Psoas muscle (tissue), 8 donors: ENCODE measurements at regions of chr12 and their contacts with region 1.

Region 1: DNA sequence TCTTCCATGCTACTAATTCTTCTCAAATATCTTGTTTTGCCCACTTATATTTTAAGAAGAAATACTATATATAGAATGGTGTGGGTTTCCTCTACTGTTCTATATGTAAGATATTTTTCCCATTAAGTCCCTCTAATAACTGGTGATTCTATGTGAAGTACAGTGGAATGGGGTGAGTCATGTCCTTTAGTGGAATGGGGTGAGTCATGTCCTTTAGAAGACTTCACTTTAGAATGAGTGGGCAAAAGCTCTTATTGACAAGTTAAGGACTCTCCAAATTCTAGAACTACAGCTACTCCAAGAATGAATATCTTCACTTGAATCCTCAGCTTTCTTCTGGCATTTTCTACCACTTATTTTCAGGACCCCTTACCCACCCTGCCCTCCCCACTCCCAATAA is 349.9 kb downstream of the ETNK1 start:
- DNase-seq: no peak
- ATAC-seq: no peak
- H3K4me3 ChIP-seq: no peak overlapping the region
- H3K27ac ChIP-seq: no peak overlapping the region
- H3K4me1 ChIP-seq: no peaks in the 10 kb centered on the region
- H3K27me3 ChIP-seq: no peaks in the 10 kb centered on the region
- CTCF ChIP-seq: no peak

Region 2: DNA sequence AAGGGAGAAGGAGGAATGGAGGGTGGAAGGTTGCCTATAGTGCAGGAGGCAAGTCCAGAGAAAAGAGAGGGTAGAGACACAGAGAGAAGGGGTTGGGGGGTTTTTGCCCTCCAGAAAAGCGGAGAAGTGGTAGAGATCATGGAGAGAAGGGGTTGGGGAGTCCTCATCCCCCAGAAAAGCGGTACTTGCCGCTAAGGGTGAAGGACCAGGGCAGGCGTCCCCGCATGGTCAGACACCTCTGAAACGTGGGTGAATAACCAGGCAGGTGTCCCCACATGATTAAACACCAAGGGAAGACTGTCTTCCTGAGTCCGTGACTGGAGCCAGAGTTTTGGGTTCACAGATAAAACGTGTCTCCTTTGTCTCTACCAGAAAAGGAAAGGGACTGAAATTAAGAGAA is 535.6 kb after region 1 on chr12:
- intact Hi-C with region 1: loop called in 1 of 2 experiments (anchors 10 kb)
- DNase-seq: no peak
- ATAC-seq: no peak
- H3K4me3 ChIP-seq: no peak overlapping the region
- H3K27ac ChIP-seq: no peak overlapping the region
- H3K4me1 ChIP-seq: no peaks in the 10 kb centered on the region
- H3K27me3 ChIP-seq: no peaks in the 10 kb centered on the region
- CTCF ChIP-seq: no peak